ENCODE measurements at regions of chr21 and their contacts with region 1.

Region 1: DNA sequence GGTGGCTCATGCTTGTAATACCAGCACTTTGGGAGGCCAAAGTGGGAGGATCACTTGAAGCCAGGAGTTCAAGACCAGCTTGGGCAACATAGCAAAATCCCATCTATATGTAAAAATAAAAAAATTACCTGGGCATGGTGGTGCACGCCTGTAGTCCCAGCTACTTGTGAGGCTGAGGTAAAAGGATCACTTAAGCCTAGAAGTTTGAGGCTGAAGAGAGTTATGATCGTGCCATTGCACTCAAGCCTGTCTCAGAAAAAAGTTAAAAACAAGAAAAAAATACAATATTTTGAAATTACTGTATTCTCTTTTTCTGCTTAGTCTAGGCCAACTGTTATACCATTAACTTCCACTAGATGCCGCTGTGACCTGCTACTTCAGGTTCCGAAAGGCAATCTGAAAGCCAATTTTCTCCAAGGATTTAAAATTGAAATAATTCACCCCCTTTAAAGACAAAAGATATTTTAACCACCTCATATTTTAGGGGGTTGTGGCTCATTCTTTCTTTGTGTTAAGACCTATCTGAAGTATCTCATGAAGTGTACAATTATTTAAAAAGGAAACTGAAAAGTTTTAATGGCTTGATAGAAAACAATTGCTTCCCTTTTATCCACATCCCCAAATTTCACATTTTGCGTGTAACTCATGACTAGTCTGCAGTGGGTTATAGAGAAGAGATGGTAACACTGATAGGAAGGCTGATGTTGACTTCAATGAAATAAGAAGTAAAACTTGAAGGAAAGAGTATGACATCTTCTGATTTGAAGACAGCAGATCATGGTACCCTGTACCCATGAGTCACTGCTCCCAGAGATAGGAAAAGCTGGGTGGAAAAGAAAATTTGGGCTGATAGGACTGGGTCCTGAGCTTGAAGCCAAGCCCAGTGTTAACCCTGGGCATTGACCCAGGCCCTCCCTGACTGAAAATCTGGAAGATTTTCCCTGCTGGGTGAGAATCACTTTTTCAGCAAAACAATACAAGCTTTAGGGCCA is 24.4 kb upstream of the CLDN14 start:
- DNase-seq: peak; percentile 63
- H3K4me3 Mint-ChIP-seq: no peak overlapping the region
- H3K27ac Mint-ChIP-seq: no peak overlapping the region
- H3K4me1 Mint-ChIP-seq: no peaks in the 10 kb centered on the region
- H3K27me3 Mint-ChIP-seq: no peaks in the 10 kb centered on the region

Region 2: DNA sequence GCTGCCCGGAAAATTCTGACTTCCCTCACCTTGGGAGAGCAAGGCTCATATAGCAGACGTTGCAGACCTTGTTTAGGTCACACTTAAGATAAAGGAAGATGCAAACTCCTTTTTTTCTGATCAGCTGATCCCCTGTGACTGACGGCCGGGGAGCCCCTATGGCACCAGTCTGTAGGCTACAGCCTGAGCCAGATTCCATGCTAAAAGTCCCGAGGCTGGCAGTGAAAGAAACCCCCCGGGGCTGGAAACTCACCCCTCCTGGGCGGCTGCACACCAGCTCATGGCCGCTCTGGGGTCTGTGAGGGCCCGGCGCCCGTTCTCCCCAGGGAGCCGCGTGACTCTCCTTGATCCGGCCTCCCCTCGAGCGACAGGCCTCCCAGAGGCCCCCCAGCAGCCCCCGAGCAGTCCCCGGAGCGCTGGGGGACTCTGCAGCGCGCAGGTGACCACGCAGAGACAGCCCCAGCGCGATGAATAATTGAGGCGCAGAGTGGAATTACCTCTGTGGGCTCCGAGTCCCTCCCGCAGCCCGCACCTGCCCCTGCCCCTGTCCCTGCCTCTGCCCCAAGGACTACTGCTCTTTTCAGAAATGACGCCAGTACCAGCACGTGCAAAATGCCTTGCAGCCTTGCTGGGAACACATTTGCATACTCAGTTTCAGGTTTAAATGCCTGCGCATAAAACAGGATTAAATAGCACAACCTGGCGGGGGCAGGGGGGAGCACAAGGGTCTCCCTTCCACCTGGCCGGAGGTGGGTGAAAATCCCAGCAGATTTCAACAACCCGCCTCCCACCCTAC is 38.1 kb after region 1 on chr21:
- CTCF ChIA-PET with region 1: interaction called, 4 read pairs
- intact Hi-C with region 1: loop called (anchors 2 kb)
- DNase-seq: peak; percentile 55
- H3K4me3 Mint-ChIP-seq: no peak overlapping the region
- H3K27ac Mint-ChIP-seq: no peak overlapping the region
- H3K4me1 Mint-ChIP-seq: no peaks in the 10 kb centered on the region
- H3K27me3 Mint-ChIP-seq: peaks cover 12% of the 10 kb centered on the region

Region 3: GRCh38 chr21:36854391-36854790 is 350.0 kb after region 1 on chr21:
- CTCF ChIA-PET with region 1: interaction called, 4 read pairs
- intact Hi-C with region 1: loop called (anchors 1 kb)
- DNase-seq: peak; percentile 26
- H3K4me3 Mint-ChIP-seq: no peak overlapping the region
- H3K27ac Mint-ChIP-seq: no peak overlapping the region
- H3K4me1 Mint-ChIP-seq: peaks cover 8% of the 10 kb centered on the region
- H3K27me3 Mint-ChIP-seq: no peaks in the 10 kb centered on the region

Measured in activated naive CD4-positive, alpha-beta T cell treated with anti-CD3 and anti-CD28 coated beads for 36 hours (primary cell).